ENCODE measurements at regions of chr11 and their contacts with region 1.

Region 1: DNA sequence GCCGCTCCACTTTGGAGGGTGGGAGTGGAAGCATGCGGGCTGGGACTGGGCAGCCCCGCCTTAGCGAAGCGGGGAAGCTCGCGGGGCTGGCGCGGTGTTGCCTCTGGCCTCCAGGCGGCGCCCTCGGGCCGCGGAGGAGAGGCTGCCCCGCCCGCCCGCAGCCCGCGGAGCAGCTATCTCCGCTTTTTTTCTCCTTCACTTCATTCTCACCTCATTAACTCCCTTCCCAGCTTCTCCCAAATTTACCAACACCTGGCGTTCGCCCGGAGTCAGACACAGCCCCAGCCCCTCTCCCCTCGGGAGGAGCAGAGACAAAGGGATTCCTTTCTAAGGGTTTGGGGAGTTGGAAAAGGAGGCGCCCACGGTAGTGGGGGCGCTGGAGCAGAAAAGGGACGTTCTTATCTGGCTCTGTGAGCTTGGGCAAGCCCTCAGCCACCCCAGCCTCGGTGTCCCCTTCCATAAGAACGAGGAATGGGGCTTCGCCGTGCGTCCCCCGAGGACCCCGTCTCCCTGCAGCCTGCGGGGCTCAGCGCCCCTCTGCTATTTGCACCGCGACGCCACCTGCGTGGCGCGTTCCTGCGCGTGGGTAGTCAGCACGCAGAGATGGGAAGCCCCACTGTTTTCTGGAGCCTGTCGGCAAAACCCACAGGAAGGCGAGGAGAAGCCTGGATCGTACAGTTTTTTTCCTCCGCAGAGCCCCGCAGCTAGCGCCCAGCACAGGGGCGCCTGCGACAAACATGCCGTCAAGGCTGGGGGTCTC is 1.5 kb upstream of the WNT11 start:
- DNase-seq: peak; percentile 62 to 82 (median 77)
- ATAC-seq: peak; percentile 66 to 73
- H3K4me3 Mint-ChIP-seq: peak overlapping the region; percentile 74 to 86 (median 85)
- H3K27ac Mint-ChIP-seq: peak overlapping the region in 1 of 10 donors; percentile 44
- H3K4me1 Mint-ChIP-seq: peaks cover 1 to 44% (median 21%) of the 10 kb centered on the region in 4 donors
- H3K27me3 Mint-ChIP-seq: peaks cover 20 to 54% (median 33%) of the 10 kb centered on the region in 5 donors

Region 2: DNA sequence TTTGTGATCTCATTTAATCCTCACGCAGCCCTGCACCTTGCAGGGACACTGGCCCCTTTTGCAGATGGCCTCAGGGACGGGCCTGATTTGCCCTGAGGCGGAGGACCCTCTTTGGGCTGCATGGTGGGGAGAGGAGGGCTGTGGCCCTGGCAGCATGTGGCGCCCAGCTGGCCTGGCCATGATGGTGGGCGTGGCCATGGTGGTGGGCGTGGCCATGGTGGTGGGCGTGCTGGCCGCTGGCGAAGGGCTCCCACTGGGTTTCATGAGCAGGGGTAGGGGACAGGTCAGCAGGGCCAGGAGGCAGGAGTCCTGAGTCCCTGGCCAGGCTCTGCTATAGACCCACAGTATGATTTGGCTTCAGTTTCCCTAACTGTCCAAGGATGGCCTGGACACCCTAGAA is 14.6 kb before region 1 on chr11:
- POLR2A ChIA-PET with region 1: no interaction called
- DNase-seq: no peak
- ATAC-seq: no peak
- H3K4me3 Mint-ChIP-seq: no peak overlapping the region
- H3K27ac Mint-ChIP-seq: no peak overlapping the region
- H3K4me1 Mint-ChIP-seq: no peaks in the 10 kb centered on the region
- H3K27me3 Mint-ChIP-seq: no peaks in the 10 kb centered on the region

Region 3: GRCh38 chr11:76218449-76219178 is 10.8 kb after region 1 on chr11:
- POLR2A ChIA-PET with region 1: no interaction called
- DNase-seq: no peak
- ATAC-seq: no peak
- H3K4me3 Mint-ChIP-seq: no peak overlapping the region
- H3K27ac Mint-ChIP-seq: no peak overlapping the region
- H3K4me1 Mint-ChIP-seq: peaks cover 0 to under 1% (median 0%) of the 10 kb centered on the region in 4 donors
- H3K27me3 Mint-ChIP-seq: peaks cover 0 to 10% (median 2%) of the 10 kb centered on the region in 5 donors

Region 4: GRCh38 chr11:76235233-76236091 is 27.6 kb after region 1 on chr11:
- POLR2A ChIA-PET with region 1: interaction called, 22 read pairs
- DNase-seq: peak; percentile 77 to 97 (median 91)
- ATAC-seq: peak; percentile 85 to 88
- H3K4me3 Mint-ChIP-seq: peak overlapping the region; percentile 89 to 98 (median 94)
- H3K27ac Mint-ChIP-seq: peak overlapping the region; percentile 91 to 100 (median 94)
- H3K4me1 Mint-ChIP-seq: peaks cover 30 to 59% (median 53%) of the 10 kb centered on the region in 4 donors
- H3K27me3 Mint-ChIP-seq: peaks cover 0 to 10% (median 0%) of the 10 kb centered on the region in 5 donors

Region 5: GRCh38 chr11:76318744-76319384 is 111.0 kb after region 1 on chr11:
- POLR2A ChIA-PET with region 1: interaction called, 20 read pairs
- DNase-seq: peak; percentile 73 to 91 (median 83)
- ATAC-seq: peak; percentile 97 to 100
- H3K4me3 Mint-ChIP-seq: no peak overlapping the region
- H3K27ac Mint-ChIP-seq: no peak overlapping the region
- H3K4me1 Mint-ChIP-seq: no peaks in the 10 kb centered on the region
- H3K27me3 Mint-ChIP-seq: peaks cover 20 to 49% (median 31%) of the 10 kb centered on the region in 5 donors